ENCODE measurements at regions of chr19 and their contacts with region 1.

Region 1: DNA sequence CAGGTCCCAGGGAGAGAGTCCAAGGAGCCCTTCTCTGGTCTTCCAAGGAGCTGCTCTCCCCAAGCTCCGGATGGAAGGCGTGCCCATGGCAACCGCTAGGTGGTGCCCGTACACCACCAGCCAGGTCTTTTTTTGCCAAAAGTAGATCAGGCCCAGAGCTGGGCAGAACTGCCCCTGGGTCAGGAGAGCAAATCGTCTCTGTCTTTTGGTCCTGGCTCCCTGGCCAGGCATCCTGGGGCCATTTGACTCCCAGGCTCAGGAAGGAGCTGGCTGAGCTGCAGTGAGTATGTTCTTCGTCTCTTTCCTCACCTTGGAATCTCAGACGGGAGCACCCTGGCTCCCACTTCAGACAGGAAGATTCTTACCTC is 24.6 kb upstream of the BCL3 start:
- DNase-seq: peak; percentile 91
- H3K4me3 Mint-ChIP-seq: peak overlapping the region; percentile 22
- H3K27ac Mint-ChIP-seq: peak overlapping the region; percentile 74
- H3K4me1 Mint-ChIP-seq: peaks cover 62% of the 10 kb centered on the region
- H3K27me3 Mint-ChIP-seq: no peaks in the 10 kb centered on the region
- CTCF ChIP-seq: peak; percentile 98

Region 2: GRCh38 chr19:44447916-44448674 is 275.8 kb before region 1 on chr19 and contains the start of gene ZNF229:
- CTCF ChIA-PET with region 1: no interaction called
- intact Hi-C with region 1: no loop called
- DNase-seq: peak; percentile 78
- H3K4me3 Mint-ChIP-seq: peak within 1 kb of the TSS; percentile 71
- H3K27ac Mint-ChIP-seq: peak within 1 kb of the TSS; percentile 57
- H3K4me1 Mint-ChIP-seq: no peaks in the 10 kb centered on the region
- H3K27me3 Mint-ChIP-seq: peaks cover 7% of the 10 kb centered on the region
- CTCF ChIP-seq: no peak
- total RNA-seq, gene ZNF229: 4.0 and 4.2 TPM in 2 replicates

Region 3: GRCh38 chr19:44712864-44713515 is 10.9 kb before region 1 on chr19:
- CTCF ChIA-PET with region 1: interaction called, 13 read pairs
- intact Hi-C with region 1: no loop called
- DNase-seq: no peak
- H3K4me3 Mint-ChIP-seq: no peak overlapping the region
- H3K27ac Mint-ChIP-seq: no peak overlapping the region
- H3K4me1 Mint-ChIP-seq: peaks cover 2% of the 10 kb centered on the region
- H3K27me3 Mint-ChIP-seq: no peaks in the 10 kb centered on the region
- CTCF ChIP-seq: no peak

Region 4: DNA sequence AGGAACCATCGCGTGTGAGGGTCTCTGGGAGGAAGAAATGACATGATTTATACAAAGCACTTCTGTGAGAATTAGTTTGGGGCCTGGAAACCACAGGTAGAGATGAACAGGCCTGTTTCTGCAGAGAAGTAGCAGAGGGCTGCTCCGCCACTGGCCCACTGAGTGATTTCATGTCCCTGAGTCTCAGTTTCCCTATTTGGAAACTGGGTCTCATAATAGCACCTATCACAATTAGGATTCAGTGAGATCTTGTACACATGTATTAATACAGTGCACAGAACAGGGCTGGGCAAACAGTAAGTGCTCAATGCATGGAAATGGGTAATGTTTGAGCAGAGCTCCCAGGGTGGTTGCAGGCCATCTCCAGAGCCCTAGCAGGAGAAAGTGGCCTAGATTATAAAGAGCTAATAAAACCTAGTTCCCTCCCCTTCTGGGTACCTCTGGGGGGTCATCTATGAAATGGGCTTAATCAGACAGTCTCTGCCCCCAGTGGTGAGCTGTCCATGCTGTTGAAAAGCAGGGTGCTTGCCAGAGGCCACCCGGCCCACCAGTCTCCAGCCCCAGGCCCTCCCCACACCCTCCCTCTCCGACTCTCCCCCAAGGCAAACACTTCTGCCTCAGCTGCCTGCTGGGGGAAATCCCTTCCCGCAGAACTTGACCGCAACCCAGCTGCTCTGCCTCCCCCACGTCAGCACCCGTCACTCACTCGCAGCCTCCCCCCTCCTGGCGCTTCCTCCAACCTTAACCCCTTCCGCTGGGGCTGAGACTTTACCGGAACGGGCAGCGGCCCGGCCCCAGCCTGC is 29.1 kb after region 1 on chr19:
- CTCF ChIA-PET with region 1: interaction called, 26 read pairs
- intact Hi-C with region 1: loop called (anchors 2 kb)
- DNase-seq: peak; percentile 97
- H3K4me3 Mint-ChIP-seq: peak overlapping the region; percentile 67
- H3K27ac Mint-ChIP-seq: peak overlapping the region; percentile 93
- H3K4me1 Mint-ChIP-seq: peaks cover 64% of the 10 kb centered on the region
- H3K27me3 Mint-ChIP-seq: no peaks in the 10 kb centered on the region
- CTCF ChIP-seq: no peak

Region 5: DNA sequence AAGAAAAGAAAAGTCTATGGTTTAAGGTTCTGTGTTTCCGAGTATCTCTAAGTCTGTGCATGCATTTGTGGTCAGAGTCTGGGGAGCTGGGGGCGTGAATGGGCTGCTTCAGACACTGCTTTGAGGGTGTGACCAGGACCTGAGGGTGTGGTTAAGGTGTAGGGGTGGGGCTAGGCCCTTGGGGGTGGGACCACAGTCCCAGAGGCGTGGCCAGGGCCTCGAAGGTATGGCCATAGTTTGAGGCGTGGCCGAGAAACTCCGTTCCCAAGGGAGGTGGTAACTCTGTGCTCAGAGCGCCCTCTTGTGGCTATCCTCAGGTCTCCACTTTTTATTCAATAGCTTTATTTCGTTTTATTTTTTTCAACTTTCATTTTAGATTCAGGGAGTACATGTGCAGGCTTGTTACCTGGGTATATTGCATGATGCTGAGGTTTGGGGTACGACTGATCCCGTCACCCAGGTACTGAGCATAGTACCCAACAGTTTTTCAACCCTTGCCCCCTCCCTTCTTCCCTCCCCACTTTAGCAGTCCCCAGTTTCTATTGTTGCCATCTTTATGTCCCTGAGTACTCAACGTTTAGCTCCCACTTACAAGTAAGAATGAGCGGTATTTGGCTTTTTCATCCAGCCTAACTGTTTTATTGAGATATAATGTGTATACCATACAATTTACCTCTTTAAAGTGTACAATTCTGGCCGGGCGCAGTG is 46.8 kb after region 1 on chr19:
- CTCF ChIA-PET with region 1: interaction called, 223 read pairs
- intact Hi-C with region 1: loop called (anchors 1 kb)
- DNase-seq: peak; percentile 99
- H3K4me3 Mint-ChIP-seq: no peak overlapping the region
- H3K27ac Mint-ChIP-seq: peak overlapping the region; percentile 31
- H3K4me1 Mint-ChIP-seq: peaks cover 37% of the 10 kb centered on the region
- H3K27me3 Mint-ChIP-seq: no peaks in the 10 kb centered on the region
- CTCF ChIP-seq: peak; percentile 87

Region 6: DNA sequence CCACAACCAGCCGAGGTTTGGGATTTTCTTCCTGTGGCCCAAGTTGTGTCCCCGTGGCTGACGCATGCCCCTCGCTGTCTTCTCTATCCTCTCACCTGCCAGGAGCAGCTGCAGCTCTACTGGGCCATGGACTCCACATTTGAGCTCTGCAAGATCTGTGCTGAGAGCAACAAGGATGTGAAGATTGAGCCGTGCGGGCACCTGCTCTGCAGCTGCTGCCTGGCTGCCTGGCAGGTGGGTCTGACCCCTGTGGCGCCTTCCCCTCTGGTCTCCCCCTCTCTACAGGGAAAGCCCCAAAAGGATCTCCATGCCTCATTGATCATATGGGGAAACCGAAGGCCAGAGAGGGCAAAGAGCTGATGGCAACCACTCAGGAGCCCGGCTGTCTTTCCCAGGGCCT is 68.3 kb after region 1 on chr19:
- CTCF ChIA-PET with region 1: no interaction called
- intact Hi-C with region 1: no loop called
- DNase-seq: no peak
- H3K4me3 Mint-ChIP-seq: no peak overlapping the region
- H3K27ac Mint-ChIP-seq: peak overlapping the region; percentile 66
- H3K4me1 Mint-ChIP-seq: no peaks in the 10 kb centered on the region
- H3K27me3 Mint-ChIP-seq: no peaks in the 10 kb centered on the region
- CTCF ChIP-seq: no peak

Region 7: GRCh38 chr19:44820648-44821609 is 97.0 kb after region 1 on chr19:
- CTCF ChIA-PET with region 1: no interaction called
- intact Hi-C with region 1: no loop called
- DNase-seq: no peak
- H3K4me3 Mint-ChIP-seq: no peak overlapping the region
- H3K27ac Mint-ChIP-seq: no peak overlapping the region
- H3K4me1 Mint-ChIP-seq: peaks cover 14% of the 10 kb centered on the region
- H3K27me3 Mint-ChIP-seq: peaks cover 25% of the 10 kb centered on the region
- CTCF ChIP-seq: no peak